ENCODE measurements at regions of chr20 and their contacts with region 1.

Region 1: GRCh38 chr20:49306526-49307278 is 28.8 kb upstream of the ZNFX1 start:
- DNase-seq: peak; percentile 83 to 86
- H3K4me3 ChIP-seq: no peak overlapping the region
- H3K27ac ChIP-seq: no peak overlapping the region
- H3K4me1 ChIP-seq: peaks cover 6% of the 10 kb centered on the region
- H3K27me3 ChIP-seq: no peaks in the 10 kb centered on the region
- CTCF ChIP-seq: no peak

Region 2: GRCh38 chr20:49287555-49288249 is 19.0 kb before region 1 on chr20:
- CTCF ChIA-PET with region 1: no interaction called
- POLR2A ChIA-PET with region 1: interaction called, 5 read pairs
- intact Hi-C with region 1: loop called (anchors 2 kb)
- DNase-seq: peak in 1 of 2 experiments; percentile 73
- H3K4me3 ChIP-seq: peak overlapping the region; percentile 9; the same call in 1 of the 2 replicates
- H3K27ac ChIP-seq: peak overlapping the region; percentile 82
- H3K4me1 ChIP-seq: peaks cover 67% of the 10 kb centered on the region
- H3K27me3 ChIP-seq: peaks cover 5% of the 10 kb centered on the region; the same call in 1 of the 2 replicates
- CTCF ChIP-seq: no peak

Region 3: DNA sequence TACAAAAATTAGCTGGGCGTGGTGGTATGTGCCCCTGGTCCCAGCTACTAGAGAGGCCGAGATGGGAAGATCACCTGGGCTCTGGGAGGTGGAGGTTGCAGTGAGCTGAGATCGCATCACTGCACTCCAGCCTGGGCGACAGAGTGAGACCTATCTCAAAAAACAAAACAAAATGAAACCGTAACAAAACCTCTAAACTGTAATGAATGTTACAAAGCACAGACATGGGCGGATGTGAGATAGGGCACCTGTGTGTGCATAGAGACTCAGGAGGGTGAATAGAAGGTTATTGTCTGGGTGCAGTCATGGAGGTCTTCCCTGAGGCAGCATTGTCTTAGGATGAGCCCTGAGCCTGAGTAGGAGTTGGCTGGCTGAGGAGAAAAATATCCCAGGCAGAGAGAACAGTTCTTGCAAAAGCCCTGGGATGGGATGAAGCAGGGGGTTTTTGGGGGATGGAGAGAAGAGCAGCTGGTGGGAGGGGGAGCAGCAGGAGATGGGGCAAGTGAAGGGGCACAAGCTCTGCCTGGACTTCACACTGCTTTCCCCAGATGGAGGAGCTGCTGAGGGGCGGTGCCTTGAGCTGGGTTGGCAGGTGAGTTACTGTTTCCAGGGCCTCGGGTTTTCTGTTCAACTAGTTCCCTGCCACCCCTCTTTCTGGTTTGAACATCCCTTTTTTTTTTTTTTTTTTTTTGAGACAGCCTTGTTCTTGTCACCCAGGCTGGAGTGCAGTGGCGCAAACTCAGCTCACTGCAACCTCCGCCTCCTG is 1493.4 kb after region 1 on chr20:
- CTCF ChIA-PET with region 1: no interaction called
- POLR2A ChIA-PET with region 1: no interaction called
- intact Hi-C with region 1: no loop called
- DNase-seq: no peak
- H3K4me3 ChIP-seq: no peak overlapping the region
- H3K27ac ChIP-seq: no peak overlapping the region
- H3K4me1 ChIP-seq: no peaks in the 10 kb centered on the region; the same call in 1 of the 2 replicates
- H3K27me3 ChIP-seq: no peaks in the 10 kb centered on the region
- CTCF ChIP-seq: no peak